CD8-positive, alpha-beta T cell (primary cell): ENCODE measurements at regions of chr12 and their contacts with region 1.

Region 1: GRCh38 chr12:93397412-93397811 is 19.7 kb downstream of the NUDT4 start:
- DNase-seq: no peak
- ATAC-seq: no peak
- H3K4me3 ChIP-seq: no peak overlapping the region
- H3K4me3 Mint-ChIP-seq: no peak overlapping the region
- H3K27ac ChIP-seq: no peak overlapping the region
- H3K27ac Mint-ChIP-seq: no peak overlapping the region
- H3K4me1 ChIP-seq: no peaks in the 10 kb centered on the region
- H3K4me1 Mint-ChIP-seq: peaks cover 4% of the 10 kb centered on the region
- H3K27me3 ChIP-seq: no peaks in the 10 kb centered on the region
- H3K27me3 Mint-ChIP-seq: no peaks in the 10 kb centered on the region
- CTCF ChIP-seq: no peak

Region 2: GRCh38 chr12:92784795-92785562 is 612.4 kb before region 1 on chr12:
- CTCF ChIA-PET with region 1: interaction called, 11 read pairs
- POLR2A ChIA-PET with region 1: interaction called, 3 read pairs
- intact Hi-C with region 1: loop called (anchors 2 kb)
- DNase-seq: peak in 3 of 9 experiments; percentile 28 to 77 (median 68)
- ATAC-seq: peak; percentile 99
- H3K4me3 ChIP-seq: no peak overlapping the region
- H3K4me3 Mint-ChIP-seq: no peak overlapping the region
- H3K27ac ChIP-seq: no peak overlapping the region
- H3K27ac Mint-ChIP-seq: no peak overlapping the region
- H3K4me1 ChIP-seq: no peaks in the 10 kb centered on the region
- H3K4me1 Mint-ChIP-seq: peaks cover 11% of the 10 kb centered on the region
- H3K27me3 ChIP-seq: no peaks in the 10 kb centered on the region
- H3K27me3 Mint-ChIP-seq: no peaks in the 10 kb centered on the region
- CTCF ChIP-seq: peak; percentile 61

Region 3: GRCh38 chr12:92827836-92828431 is 569.5 kb before region 1 on chr12:
- CTCF ChIA-PET with region 1: no interaction called
- POLR2A ChIA-PET with region 1: no interaction called
- intact Hi-C with region 1: loop called in 1 of 2 experiments (anchors 5 kb)
- DNase-seq: peak in 6 of 9 experiments; percentile 9 to 61 (median 36)
- ATAC-seq: no peak
- H3K4me3 ChIP-seq: no peak overlapping the region
- H3K4me3 Mint-ChIP-seq: no peak overlapping the region
- H3K27ac ChIP-seq: no peak overlapping the region
- H3K27ac Mint-ChIP-seq: no peak overlapping the region
- H3K4me1 ChIP-seq: no peaks in the 10 kb centered on the region
- H3K4me1 Mint-ChIP-seq: peaks cover under 1% of the 10 kb centered on the region
- H3K27me3 ChIP-seq: no peaks in the 10 kb centered on the region
- H3K27me3 Mint-ChIP-seq: no peaks in the 10 kb centered on the region
- CTCF ChIP-seq: peak; percentile 64

Region 4: DNA sequence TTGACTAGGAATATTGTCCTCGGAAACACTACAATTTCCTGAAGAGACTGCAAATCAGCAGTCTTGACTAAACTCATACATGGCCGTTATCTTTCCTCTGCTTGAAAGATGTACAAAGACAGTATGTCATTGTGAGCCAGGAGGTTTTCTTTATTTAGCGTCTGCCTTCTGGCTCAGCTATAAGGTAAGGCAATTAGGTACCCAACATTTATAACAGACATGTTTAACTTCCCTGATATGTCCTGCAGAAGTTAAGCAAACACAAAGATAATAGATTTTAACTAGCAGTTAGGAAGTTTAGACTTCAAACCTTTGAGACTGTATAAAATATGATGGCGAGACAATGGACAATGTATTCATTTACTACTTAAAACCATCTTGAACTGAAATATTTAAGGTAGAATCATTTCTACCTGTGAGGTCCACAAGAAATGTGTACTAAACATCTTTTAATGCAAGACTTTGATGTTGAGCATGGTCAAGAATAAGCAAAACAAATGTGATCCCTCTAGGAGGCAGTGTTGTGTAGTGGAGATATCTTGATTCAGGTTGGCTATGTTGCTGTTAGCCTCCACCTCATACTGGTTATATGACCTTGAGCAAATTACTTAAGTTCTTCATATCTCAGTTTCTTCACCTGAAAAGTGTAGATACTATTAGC is 372.1 kb before region 1 on chr12:
- CTCF ChIA-PET with region 1: no interaction called
- POLR2A ChIA-PET with region 1: no interaction called
- intact Hi-C with region 1: loop called in 1 of 2 experiments (anchors 2 kb)
- DNase-seq: peak in 2 of 9 experiments; percentile 22 to 41
- ATAC-seq: no peak
- H3K4me3 ChIP-seq: no peak overlapping the region
- H3K4me3 Mint-ChIP-seq: no peak overlapping the region
- H3K27ac ChIP-seq: no peak overlapping the region
- H3K27ac Mint-ChIP-seq: no peak overlapping the region
- H3K4me1 ChIP-seq: no peaks in the 10 kb centered on the region
- H3K4me1 Mint-ChIP-seq: no peaks in the 10 kb centered on the region
- H3K27me3 ChIP-seq: no peaks in the 10 kb centered on the region
- H3K27me3 Mint-ChIP-seq: no peaks in the 10 kb centered on the region
- CTCF ChIP-seq: no peak

Region 5: DNA sequence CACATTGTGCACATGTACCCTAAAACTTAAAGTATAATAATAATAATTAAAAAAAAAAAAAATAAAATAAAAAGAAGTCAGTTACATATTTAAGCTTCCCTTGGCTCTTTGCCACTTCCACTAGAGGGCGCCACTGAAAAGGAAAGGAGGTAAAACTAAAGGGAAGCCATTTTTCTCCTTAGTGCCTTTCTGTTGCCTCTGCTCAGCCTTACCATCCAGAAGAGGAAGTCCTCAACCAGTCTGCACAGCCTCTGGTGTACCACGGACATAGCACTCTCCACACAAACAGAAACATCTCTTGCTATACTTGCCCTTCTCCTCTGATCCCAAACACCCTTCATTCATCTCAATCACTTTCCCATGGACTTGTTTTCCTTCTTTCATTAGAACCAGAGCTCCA is 299.3 kb before region 1 on chr12:
- CTCF ChIA-PET with region 1: interaction called, 37 read pairs
- POLR2A ChIA-PET with region 1: no interaction called
- intact Hi-C with region 1: loop called (anchors 2 kb)
- DNase-seq: peak; percentile 41 to 79 (median 69)
- ATAC-seq: peak; percentile 83
- H3K4me3 ChIP-seq: no peak overlapping the region
- H3K4me3 Mint-ChIP-seq: no peak overlapping the region
- H3K27ac ChIP-seq: no peak overlapping the region
- H3K27ac Mint-ChIP-seq: no peak overlapping the region
- H3K4me1 ChIP-seq: no peaks in the 10 kb centered on the region
- H3K4me1 Mint-ChIP-seq: peaks cover 9% of the 10 kb centered on the region
- H3K27me3 ChIP-seq: no peaks in the 10 kb centered on the region
- H3K27me3 Mint-ChIP-seq: no peaks in the 10 kb centered on the region
- CTCF ChIP-seq: peak; percentile 65